Aorta (tissue), 5 donors: ENCODE measurements at regions of chr1 and their contacts with region 1.

Region 1: GRCh38 chr1:70896224-70896623 is 151.4 kb downstream of the PTGER3 start:
- DNase-seq: no peak
- ATAC-seq: no peak
- H3K4me3 ChIP-seq: no peak overlapping the region
- H3K27ac ChIP-seq: no peak overlapping the region
- H3K4me1 ChIP-seq: no peaks in the 10 kb centered on the region
- H3K27me3 ChIP-seq: no peaks in the 10 kb centered on the region

Region 2: DNA sequence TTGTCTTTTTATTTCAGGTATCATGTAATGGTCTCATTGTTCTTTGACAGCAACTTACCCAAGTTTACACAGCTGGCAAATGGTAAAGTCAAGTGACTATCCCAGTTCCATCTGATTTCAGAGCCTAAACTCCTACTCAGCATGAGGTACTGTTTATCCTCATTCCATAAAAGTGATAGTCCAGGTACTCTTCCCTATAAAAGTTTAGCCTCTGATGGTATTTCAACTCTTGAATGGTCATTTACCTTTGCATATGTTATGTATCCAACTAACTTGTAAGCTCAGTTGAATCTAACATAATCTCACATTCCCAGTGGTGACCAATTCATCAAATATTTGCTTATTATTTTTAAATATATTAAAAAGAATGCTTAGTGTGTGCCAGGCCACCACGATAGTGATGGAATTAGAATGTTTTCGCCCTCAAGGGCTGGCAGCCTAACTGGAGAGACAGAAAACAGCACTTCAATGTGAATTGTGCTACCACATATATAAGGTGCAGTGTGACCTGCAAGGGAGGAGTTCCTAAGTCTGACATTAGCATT is 178.1 kb before region 1 on chr1:
- intact Hi-C with region 1: loop called in 1 of 2 experiments (anchors 10 kb)
- DNase-seq: no peak
- ATAC-seq: no peak
- H3K4me3 ChIP-seq: no peak overlapping the region
- H3K27ac ChIP-seq: peak overlapping the region; percentile 43 to 54
- H3K4me1 ChIP-seq: peaks cover 3 to 12% of the 10 kb centered on the region in 2 donors
- H3K27me3 ChIP-seq: no peaks in the 10 kb centered on the region

Region 3: GRCh38 chr1:70809069-70809468 is 87.2 kb before region 1 on chr1:
- intact Hi-C with region 1: no loop called
- DNase-seq: no peak
- ATAC-seq: no peak
- H3K4me3 ChIP-seq: no peak overlapping the region
- H3K27ac ChIP-seq: no peak overlapping the region
- H3K4me1 ChIP-seq: no peaks in the 10 kb centered on the region
- H3K27me3 ChIP-seq: peaks cover 0 to 1% of the 10 kb centered on the region in 2 donors